ENCODE measurements at regions of chr4 and their contacts with region 1.

Region 1: DNA sequence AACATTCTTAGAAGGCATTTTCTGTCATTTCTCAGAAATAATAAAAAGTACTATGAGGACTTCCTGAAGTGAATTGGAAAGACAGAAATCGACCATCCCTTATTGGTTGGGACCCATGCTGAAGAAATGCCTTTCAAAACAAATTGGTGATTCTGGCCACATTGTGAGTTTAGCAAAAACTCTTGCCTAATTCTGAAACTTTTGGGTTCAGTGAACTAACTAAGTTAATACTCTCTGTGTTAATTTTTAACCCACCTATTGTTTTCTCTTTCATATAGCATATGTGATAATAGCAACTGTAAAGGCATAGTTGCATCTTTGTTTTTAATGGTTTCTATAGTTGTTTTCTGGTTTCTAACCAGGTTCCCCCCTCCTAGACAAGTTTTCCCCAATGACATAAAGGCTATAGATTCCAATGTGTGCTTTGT is 129.3 kb upstream of the FAT1 start:
- DNase-seq: no peak
- H3K4me3 Mint-ChIP-seq: no peak overlapping the region
- H3K27ac Mint-ChIP-seq: no peak overlapping the region
- H3K4me1 Mint-ChIP-seq: no peaks in the 10 kb centered on the region
- H3K27me3 Mint-ChIP-seq: no peaks in the 10 kb centered on the region
- CTCF ChIP-seq: no peak

Region 2: DNA sequence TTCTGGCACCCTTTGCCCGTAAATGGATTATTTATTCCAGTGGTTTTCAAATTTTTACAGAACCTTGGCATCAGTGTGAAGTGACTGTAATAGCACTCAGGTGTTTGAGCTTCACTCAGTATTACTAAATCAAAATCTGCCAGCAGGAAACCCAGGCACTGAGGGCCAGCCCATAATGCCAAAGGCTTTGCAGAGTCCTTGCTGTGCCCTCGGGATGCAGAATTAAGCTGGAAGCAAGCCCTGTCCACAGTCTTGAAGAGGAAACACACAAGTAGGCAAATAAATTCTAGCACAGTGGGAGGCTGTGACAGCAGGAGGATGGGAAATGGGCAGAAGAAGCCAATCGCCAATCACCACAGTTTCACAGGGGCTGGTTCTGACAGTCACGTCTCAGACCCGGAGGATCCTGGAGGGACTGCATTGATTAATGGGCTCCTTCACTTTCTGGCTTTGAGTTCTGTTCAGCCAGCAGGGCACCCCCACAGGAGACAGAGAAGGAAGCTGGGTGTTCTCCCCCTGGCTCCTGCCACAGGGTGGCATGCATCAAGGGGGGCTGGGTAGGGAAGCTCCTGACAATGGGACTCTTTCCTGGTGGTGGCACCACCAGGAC is 436.4 kb before region 1 on chr4:
- CTCF ChIA-PET with region 1: no interaction called
- intact Hi-C with region 1: no loop called
- DNase-seq: no peak
- H3K4me3 Mint-ChIP-seq: no peak overlapping the region
- H3K27ac Mint-ChIP-seq: no peak overlapping the region
- H3K4me1 Mint-ChIP-seq: no peaks in the 10 kb centered on the region
- H3K27me3 Mint-ChIP-seq: no peaks in the 10 kb centered on the region
- CTCF ChIP-seq: no peak

Region 3: GRCh38 chr4:186904101-186904500 is 51.1 kb after region 1 on chr4:
- CTCF ChIA-PET with region 1: no interaction called
- intact Hi-C with region 1: loop called (anchors 5 kb)
- DNase-seq: no peak
- H3K4me3 Mint-ChIP-seq: no peak overlapping the region
- H3K27ac Mint-ChIP-seq: peak overlapping the region; percentile 13
- H3K4me1 Mint-ChIP-seq: peaks cover 38% of the 10 kb centered on the region
- H3K27me3 Mint-ChIP-seq: no peaks in the 10 kb centered on the region
- CTCF ChIP-seq: no peak

Region 4: GRCh38 chr4:186946682-186947294 is 93.8 kb after region 1 on chr4:
- CTCF ChIA-PET with region 1: no interaction called
- intact Hi-C with region 1: no loop called
- DNase-seq: peak; percentile 77
- H3K4me3 Mint-ChIP-seq: no peak overlapping the region
- H3K27ac Mint-ChIP-seq: no peak overlapping the region
- H3K4me1 Mint-ChIP-seq: peaks cover 25% of the 10 kb centered on the region
- H3K27me3 Mint-ChIP-seq: no peaks in the 10 kb centered on the region
- CTCF ChIP-seq: peak; percentile 42

Measured in Calu3 (cell line).